Dendritic cell treated with granulocyte-macrophage colony-stimulating factor and Interleukin-4, amounts not matched to agents 40 ng/mL and 50 ng/mL, for 4 days (primary cell): ENCODE measurements at regions of chr1 and their contacts with region 1.

Region 1: GRCh38 chr1:75632350-75632949 is 21.5 kb upstream of the SLC44A5 start:
- H3K4me3 Mint-ChIP-seq: no peak overlapping the region
- H3K27ac Mint-ChIP-seq: no peak overlapping the region
- H3K4me1 Mint-ChIP-seq: no peaks in the 10 kb centered on the region
- H3K27me3 Mint-ChIP-seq: no peaks in the 10 kb centered on the region

Region 2: GRCh38 chr1:75233302-75233929 is 399.0 kb before region 1 on chr1:
- intact Hi-C with region 1: loop called (anchors 1 kb)
- H3K4me3 Mint-ChIP-seq: no peak overlapping the region
- H3K27ac Mint-ChIP-seq: no peak overlapping the region
- H3K4me1 Mint-ChIP-seq: no peaks in the 10 kb centered on the region
- H3K27me3 Mint-ChIP-seq: no peaks in the 10 kb centered on the region

Region 3: DNA sequence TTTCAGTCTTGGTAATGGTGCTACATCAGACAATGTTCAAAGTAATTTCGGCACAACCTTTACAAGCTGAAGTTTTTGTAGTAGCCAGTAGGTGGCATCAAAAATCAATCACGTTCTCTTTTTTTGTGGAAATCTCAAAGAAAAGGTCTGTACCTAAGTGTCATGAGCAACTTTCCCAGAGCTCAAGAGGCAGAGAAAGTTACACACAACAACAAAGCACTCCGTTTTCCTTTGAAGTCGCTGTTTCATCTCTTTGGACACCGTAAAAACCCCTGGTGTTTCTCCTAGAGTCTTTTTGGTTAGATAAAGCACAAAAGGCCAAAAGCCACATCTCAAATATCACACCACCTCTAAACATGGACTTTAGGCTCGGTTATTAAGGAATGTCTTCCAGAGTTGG is 366.7 kb before region 1 on chr1:
- intact Hi-C with region 1: loop called (anchors 2 kb)
- H3K4me3 Mint-ChIP-seq: no peak overlapping the region
- H3K27ac Mint-ChIP-seq: no peak overlapping the region
- H3K4me1 Mint-ChIP-seq: no peaks in the 10 kb centered on the region
- H3K27me3 Mint-ChIP-seq: peaks cover 3% of the 10 kb centered on the region

Region 4: GRCh38 chr1:75588779-75589475 is 43.5 kb before region 1 on chr1:
- intact Hi-C with region 1: no loop called
- H3K4me3 Mint-ChIP-seq: no peak overlapping the region
- H3K27ac Mint-ChIP-seq: no peak overlapping the region
- H3K4me1 Mint-ChIP-seq: no peaks in the 10 kb centered on the region
- H3K27me3 Mint-ChIP-seq: no peaks in the 10 kb centered on the region

Region 5: DNA sequence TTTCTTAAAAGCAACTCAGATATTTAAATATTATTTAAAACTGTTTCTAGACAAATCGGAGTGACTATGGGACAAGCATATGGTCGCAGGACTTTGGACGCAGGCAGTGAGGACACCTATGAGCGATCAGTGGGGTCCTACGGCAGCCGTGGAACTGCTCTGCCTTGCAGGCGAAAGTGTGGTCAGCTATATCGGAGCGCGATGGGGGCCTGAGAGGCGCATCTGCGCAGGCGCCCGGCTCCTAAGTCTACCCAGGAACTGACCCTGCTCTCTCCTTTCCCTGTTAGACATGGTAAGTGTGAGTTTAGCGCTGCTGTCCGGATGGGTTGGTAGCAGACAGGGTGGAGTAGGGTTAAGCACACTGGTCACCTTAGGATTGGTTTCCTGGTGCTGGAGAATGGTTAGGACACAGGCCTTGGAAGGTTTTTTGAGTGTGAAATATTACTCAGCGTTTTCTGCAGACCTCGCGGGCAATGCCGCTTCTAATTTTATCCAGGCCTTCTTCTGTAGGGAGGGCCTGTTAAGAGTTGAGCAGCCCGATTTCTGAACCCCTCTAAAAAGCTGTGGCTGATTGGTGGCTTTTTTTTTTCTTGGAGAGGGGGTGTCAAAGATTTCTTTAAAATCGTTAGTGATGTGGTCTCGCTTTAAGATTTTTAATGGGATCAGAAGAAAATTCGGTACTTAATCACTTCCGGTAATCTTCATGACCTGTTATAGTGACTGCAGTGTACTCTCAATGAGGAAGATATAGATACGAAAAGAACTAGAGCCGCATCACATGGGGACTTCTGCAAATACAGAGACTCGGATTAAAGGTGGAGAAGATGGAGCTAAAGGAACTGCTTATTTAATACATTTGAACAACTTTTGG is 153.8 kb after region 1 on chr1 and contains the start of gene RABGGTB:
- intact Hi-C with region 1: no loop called
- H3K4me3 Mint-ChIP-seq: peak within 1 kb of the TSS; percentile 93
- H3K27ac Mint-ChIP-seq: peak within 1 kb of the TSS; percentile 97
- H3K4me1 Mint-ChIP-seq: peaks cover 54% of the 10 kb centered on the region
- H3K27me3 Mint-ChIP-seq: no peaks in the 10 kb centered on the region